ENCODE measurements at regions of chr18 and their contacts with region 1.

Region 1: DNA sequence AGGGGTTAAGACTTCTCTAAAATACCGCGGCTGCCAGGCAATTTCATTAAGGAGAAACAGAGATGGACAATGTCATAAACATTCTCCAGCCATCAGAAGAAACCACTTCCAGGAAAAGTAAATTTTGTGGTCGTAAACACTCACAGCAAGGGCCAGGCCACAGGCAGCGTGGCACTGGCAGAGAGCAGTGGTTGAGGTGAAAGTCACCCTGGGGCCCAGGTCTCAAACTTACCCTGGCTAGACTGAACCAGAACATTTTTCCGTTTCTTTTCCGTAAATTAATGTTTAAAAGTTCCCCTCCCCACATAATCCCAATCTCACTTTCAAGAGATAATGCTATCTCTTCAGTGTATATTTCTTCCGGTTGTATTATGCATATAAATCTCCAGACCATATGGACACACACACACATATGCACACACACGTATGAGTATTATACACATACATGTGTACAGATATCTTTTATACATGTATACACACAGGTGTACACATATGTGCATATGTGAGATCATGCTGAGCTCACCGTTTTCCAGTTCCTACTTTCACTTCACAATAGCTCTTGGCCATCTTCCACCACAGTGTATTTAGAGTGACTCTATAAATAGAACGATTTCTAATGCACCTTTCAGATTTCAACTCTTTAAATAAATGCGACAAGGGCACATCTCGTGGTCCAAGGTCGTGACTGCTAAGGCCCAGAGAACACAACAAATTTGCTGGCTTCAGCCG is 90.1 kb downstream of the MALT1 start:
- DNase-seq: no peak
- H3K4me3 ChIP-seq: no peak overlapping the region
- H3K4me3 Mint-ChIP-seq: peak overlapping the region in 5 of 8 donors; percentile 15 to 46 (median 37)
- H3K27ac ChIP-seq: no peak overlapping the region
- H3K27ac Mint-ChIP-seq: peak overlapping the region in 1 of 7 donors; percentile 75
- H3K4me1 ChIP-seq: peaks cover 19% of the 10 kb centered on the region
- H3K4me1 Mint-ChIP-seq: peaks cover 24 to 35% (median 27%) of the 10 kb centered on the region in 4 donors
- H3K27me3 ChIP-seq: no peaks in the 10 kb centered on the region
- H3K27me3 Mint-ChIP-seq: peaks cover 10 to 11% of the 10 kb centered on the region in 2 donors

Region 2: GRCh38 chr18:58501066-58501896 is 260.1 kb before region 1 on chr18:
- CTCF ChIA-PET with region 1: interaction called, 25 read pairs
- POLR2A ChIA-PET with region 1: interaction called, 3 read pairs
- intact Hi-C with region 1: no loop called
- DNase-seq: peak in 1 of 5 donors; percentile 4
- H3K4me3 ChIP-seq: no peak overlapping the region
- H3K4me3 Mint-ChIP-seq: peak overlapping the region in 3 of 8 donors; percentile 25 to 35 (median 32)
- H3K27ac ChIP-seq: no peak overlapping the region
- H3K27ac Mint-ChIP-seq: peak overlapping the region in 3 of 7 donors; percentile 31 to 48 (median 31)
- H3K4me1 ChIP-seq: peaks cover 28% of the 10 kb centered on the region
- H3K4me1 Mint-ChIP-seq: peaks cover 4 to 18% (median 7%) of the 10 kb centered on the region in 4 donors
- H3K27me3 ChIP-seq: no peaks in the 10 kb centered on the region
- H3K27me3 Mint-ChIP-seq: peaks cover 4 to 9% of the 10 kb centered on the region in 2 donors

Region 3: DNA sequence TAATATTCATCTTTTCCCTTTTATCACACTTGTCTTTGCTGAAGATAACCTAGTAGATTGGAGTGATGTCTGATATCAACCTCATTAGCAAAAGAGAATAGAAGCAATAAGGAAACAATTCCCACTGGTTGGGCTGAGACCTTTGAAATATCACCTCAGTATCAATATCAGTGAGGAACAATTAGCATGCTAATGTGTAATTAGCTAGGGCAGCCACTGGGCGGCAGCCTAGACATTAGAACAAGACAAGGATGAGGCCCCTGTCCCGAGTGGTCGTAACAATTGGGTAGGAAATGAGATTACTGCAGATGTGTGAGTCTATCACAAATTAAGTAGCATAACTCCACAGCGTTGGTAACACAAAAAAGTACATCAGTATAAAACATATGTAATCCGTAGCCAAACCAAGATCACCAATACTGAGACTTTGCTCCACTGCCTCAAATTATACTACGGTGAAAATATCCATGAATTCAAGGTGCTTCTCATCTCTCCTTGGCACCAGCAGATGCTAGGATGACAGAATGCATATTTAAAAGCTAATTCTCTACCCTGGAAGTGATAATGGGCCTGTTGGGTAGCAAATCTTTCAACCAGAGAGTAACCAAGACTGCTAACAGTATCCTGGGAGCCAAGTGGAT is 231.6 kb before region 1 on chr18:
- CTCF ChIA-PET with region 1: interaction called, 827 read pairs
- POLR2A ChIA-PET with region 1: interaction called, 28 read pairs
- intact Hi-C with region 1: loop called (anchors 1 kb)
- DNase-seq: peak; percentile 49 to 68 (median 62)
- H3K4me3 ChIP-seq: no peak overlapping the region
- H3K4me3 Mint-ChIP-seq: no peak overlapping the region
- H3K27ac ChIP-seq: no peak overlapping the region
- H3K27ac Mint-ChIP-seq: no peak overlapping the region
- H3K4me1 ChIP-seq: peaks cover 4% of the 10 kb centered on the region
- H3K4me1 Mint-ChIP-seq: peaks cover 4 to 5% (median 5%) of the 10 kb centered on the region in 4 donors
- H3K27me3 ChIP-seq: no peaks in the 10 kb centered on the region
- H3K27me3 Mint-ChIP-seq: peaks cover 0 to 3% of the 10 kb centered on the region in 2 donors

Region 4: GRCh38 chr18:58682429-58683069 is 78.9 kb before region 1 on chr18:
- CTCF ChIA-PET with region 1: interaction called, 10 read pairs
- POLR2A ChIA-PET with region 1: interaction called, 3 read pairs
- intact Hi-C with region 1: no loop called
- DNase-seq: no peak
- H3K4me3 ChIP-seq: no peak overlapping the region
- H3K4me3 Mint-ChIP-seq: peak overlapping the region in 2 of 8 donors; percentile 6 to 25
- H3K27ac ChIP-seq: no peak overlapping the region
- H3K27ac Mint-ChIP-seq: peak overlapping the region; percentile 44 to 87 (median 65)
- H3K4me1 ChIP-seq: peaks cover 81% of the 10 kb centered on the region
- H3K4me1 Mint-ChIP-seq: peaks cover 56 to 87% (median 69%) of the 10 kb centered on the region in 4 donors
- H3K27me3 ChIP-seq: no peaks in the 10 kb centered on the region
- H3K27me3 Mint-ChIP-seq: no peaks in the 10 kb centered on the region

Region 5: DNA sequence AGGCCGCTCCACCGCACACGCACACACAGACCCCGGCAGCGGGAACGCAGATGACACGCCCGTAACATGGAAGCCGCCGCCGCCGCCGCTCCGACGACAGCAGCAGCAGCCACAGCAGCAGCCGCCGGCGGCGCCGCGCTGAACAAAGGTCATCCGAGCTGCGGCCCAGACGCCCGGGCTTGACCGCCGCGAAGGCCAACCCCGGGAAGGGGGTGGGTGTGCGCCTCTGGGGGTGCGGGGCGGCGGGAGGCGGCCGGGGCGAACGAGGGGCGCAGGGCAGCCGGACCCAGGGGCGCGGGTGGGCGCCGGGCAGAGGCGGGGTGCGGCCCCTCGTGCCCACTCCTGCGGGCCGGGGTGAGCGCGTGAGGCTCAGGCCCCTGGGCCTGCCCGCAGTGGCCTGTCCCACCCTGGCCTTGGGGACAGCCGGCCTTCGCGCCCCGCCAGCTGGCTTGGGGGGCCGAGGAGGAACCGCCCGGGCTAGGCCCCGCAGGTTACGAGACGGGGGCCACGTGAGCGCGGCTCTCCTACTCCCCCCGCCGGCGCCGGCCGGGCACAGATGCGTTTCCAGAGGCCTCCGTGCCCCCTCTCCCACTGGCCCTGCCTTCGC is 102.2 kb after region 1 on chr18:
- CTCF ChIA-PET with region 1: no interaction called
- POLR2A ChIA-PET with region 1: no interaction called
- intact Hi-C with region 1: no loop called
- DNase-seq: peak; percentile 23 to 56 (median 27)
- H3K4me3 ChIP-seq: no peak overlapping the region
- H3K4me3 Mint-ChIP-seq: peak overlapping the region in 7 of 8 donors; percentile 3 to 69 (median 51)
- H3K27ac ChIP-seq: no peak overlapping the region
- H3K27ac Mint-ChIP-seq: peak overlapping the region in 1 of 7 donors; percentile 84
- H3K4me1 ChIP-seq: peaks cover 8% of the 10 kb centered on the region
- H3K4me1 Mint-ChIP-seq: peaks cover 9 to 34% (median 15%) of the 10 kb centered on the region in 4 donors
- H3K27me3 ChIP-seq: peaks cover 9% of the 10 kb centered on the region
- H3K27me3 Mint-ChIP-seq: peaks cover 34 to 39% of the 10 kb centered on the region in 2 donors